GM10248 (cell line): ENCODE measurements at regions of chr15 and their contacts with region 1.

Region 1: DNA sequence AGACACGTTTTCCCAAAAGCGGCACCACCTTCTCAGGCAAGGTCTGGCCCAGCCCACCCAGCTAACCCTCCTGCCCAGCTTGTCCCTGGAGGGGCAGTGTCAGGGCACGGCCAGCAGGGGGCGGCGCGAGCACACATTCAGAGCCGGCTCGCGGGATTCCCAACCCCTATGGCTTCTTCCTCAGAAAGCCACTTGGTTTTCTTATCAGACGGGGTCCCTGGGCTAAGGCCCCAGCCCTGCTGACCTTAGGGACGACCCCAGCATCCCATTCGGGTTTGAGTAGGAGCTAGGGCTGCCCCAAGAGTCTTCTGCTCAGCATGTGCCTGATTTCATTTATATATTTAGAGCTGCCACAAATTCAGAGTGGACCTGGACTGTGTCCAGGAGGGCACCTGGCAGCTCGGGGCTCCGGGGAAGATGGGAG is 14.5 kb downstream of the RLBP1 start:
- DNase-seq: peak; percentile 88
- CTCF ChIP-seq: peak; percentile 99

Region 2: DNA sequence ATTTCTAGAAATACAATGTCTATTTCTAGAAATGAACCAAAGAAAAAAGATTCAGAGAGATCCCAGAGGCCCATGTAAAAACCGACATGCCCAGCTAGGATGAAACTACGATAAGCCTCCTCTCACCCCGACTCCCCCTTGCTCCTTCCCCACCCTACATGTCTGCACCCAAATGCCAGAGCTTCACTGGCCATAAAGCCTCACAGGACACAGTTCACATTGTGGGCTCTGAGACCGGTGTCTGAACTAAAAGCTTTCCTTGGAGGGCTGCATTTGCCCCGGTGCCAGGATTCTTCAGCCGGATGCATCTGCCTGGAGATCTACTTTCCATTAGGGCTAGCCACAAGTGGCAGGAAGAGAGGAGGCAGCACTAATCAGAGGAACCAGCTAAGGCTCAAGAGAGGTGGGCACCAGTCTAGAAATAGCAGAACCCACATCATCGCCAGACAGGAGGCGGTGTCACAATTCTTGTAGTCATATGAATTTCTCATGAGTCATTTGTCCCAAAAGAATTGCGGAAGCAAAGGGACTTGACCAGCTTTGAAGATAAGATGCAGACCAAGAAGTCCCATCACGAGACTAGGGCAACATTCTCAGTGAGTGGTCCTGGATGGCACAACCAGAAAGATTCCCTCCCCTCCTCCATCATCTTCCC is 1304.0 kb before region 1 on chr15:
- CTCF ChIA-PET with region 1: no interaction called
- POLR2A ChIA-PET with region 1: no interaction called
- DNase-seq: no peak
- CTCF ChIP-seq: no peak

Region 3: DNA sequence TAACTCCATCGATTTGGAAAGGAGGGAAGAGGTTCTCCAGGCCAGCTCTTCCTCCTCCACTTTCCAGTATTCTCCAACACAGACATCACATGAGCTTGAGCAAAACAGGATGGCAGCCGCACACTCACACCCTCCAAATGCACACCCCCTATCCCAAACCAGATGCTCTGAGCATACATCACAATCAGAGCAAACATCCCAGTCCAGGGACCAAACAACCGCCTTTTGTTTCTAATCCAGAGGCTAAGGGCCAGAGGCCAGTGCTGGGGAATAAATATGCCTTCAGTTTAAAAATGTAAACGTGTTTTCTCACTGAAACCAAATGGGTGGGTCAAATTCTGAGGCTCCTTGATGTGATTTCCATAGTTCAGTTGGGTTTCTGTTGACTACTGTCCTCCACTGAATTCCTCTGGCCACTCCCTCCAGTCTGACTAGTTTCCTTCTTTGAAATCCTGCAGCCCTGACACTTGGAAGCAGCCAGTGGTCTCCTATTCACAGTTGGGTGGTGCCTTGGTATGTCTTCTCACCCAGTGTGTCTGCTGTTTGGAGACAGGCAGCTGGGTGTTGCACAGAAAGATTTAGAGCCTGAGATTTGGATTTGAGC is 274.5 kb before region 1 on chr15:
- CTCF ChIA-PET with region 1: no interaction called
- POLR2A ChIA-PET with region 1: no interaction called
- DNase-seq: no peak
- CTCF ChIP-seq: no peak

Region 4: GRCh38 chr15:89171136-89172072 is 35.5 kb before region 1 on chr15:
- CTCF ChIA-PET with region 1: interaction called, 10 read pairs
- POLR2A ChIA-PET with region 1: no interaction called
- DNase-seq: peak; percentile 33
- CTCF ChIP-seq: peak; percentile 43

Region 5: GRCh38 chr15:89230277-89230676 is 23.4 kb after region 1 on chr15:
- CTCF ChIA-PET with region 1: interaction called, 57 read pairs
- POLR2A ChIA-PET with region 1: no interaction called
- DNase-seq: no peak
- CTCF ChIP-seq: no peak

Region 6: GRCh38 chr15:89278307-89278706 is 71.4 kb after region 1 on chr15:
- CTCF ChIA-PET with region 1: interaction called, 16 read pairs
- POLR2A ChIA-PET with region 1: no interaction called
- DNase-seq: no peak
- CTCF ChIP-seq: no peak